CD4-positive, alpha-beta memory T cell (primary cell): ENCODE measurements at regions of chr20 and their contacts with region 1.

Region 1: GRCh38 chr20:59207742-59208357 is 44.2 kb downstream of the ZNF831 start:
- DNase-seq: peak; percentile 76 to 79 (median 78)
- H3K4me3 ChIP-seq: no peak overlapping the region
- H3K4me3 Mint-ChIP-seq: peak overlapping the region in 4 of 8 donors; percentile 15 to 53 (median 33)
- H3K27ac ChIP-seq: no peak overlapping the region
- H3K27ac Mint-ChIP-seq: peak overlapping the region; percentile 35 to 95 (median 88)
- H3K4me1 ChIP-seq: peaks cover 14% of the 10 kb centered on the region
- H3K4me1 Mint-ChIP-seq: peaks cover 29 to 55% (median 35%) of the 10 kb centered on the region in 4 donors
- H3K27me3 ChIP-seq: no peaks in the 10 kb centered on the region
- H3K27me3 Mint-ChIP-seq: no peaks in the 10 kb centered on the region

Region 2: GRCh38 chr20:59055295-59055694 is 152.6 kb before region 1 on chr20:
- CTCF ChIA-PET with region 1: interaction called, 14 read pairs
- POLR2A ChIA-PET with region 1: no interaction called
- intact Hi-C with region 1: no loop called
- DNase-seq: peak in 4 of 5 donors; percentile 23 to 35 (median 27)
- H3K4me3 ChIP-seq: no peak overlapping the region
- H3K4me3 Mint-ChIP-seq: no peak overlapping the region
- H3K27ac ChIP-seq: no peak overlapping the region
- H3K27ac Mint-ChIP-seq: no peak overlapping the region
- H3K4me1 ChIP-seq: no peaks in the 10 kb centered on the region
- H3K4me1 Mint-ChIP-seq: no peaks in the 10 kb centered on the region
- H3K27me3 ChIP-seq: no peaks in the 10 kb centered on the region
- H3K27me3 Mint-ChIP-seq: peaks cover 4 to 25% of the 10 kb centered on the region in 2 donors

Region 3: DNA sequence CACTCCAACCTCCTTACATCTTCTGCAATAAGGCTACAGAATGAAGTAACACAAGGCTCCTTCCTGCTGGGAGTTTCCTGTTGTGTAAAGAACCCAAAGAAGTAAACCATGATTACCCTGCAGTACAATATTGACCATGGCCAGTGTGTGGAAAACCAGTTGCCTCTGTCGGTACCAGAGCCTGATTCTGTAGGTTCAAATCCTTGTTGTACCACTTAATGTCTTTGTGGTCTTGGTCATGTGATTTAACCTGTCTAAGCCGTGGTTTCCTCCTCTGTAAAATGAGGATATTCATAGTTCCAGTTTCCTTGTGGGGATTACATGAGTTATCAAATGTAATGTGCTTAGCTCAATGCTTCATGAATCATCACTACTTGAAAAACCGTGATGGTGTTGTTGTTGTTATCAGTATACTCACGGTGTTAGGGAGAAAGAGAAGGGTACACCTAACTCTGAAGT is 105.0 kb before region 1 on chr20:
- CTCF ChIA-PET with region 1: interaction called, 122 read pairs
- POLR2A ChIA-PET with region 1: no interaction called
- intact Hi-C with region 1: no loop called
- DNase-seq: no peak
- H3K4me3 ChIP-seq: no peak overlapping the region
- H3K4me3 Mint-ChIP-seq: peak overlapping the region in 1 of 8 donors; percentile 25
- H3K27ac ChIP-seq: no peak overlapping the region
- H3K27ac Mint-ChIP-seq: peak overlapping the region in 5 of 7 donors; percentile 1 to 29 (median 25)
- H3K4me1 ChIP-seq: peaks cover 12% of the 10 kb centered on the region
- H3K4me1 Mint-ChIP-seq: peaks cover 11 to 26% (median 20%) of the 10 kb centered on the region in 4 donors
- H3K27me3 ChIP-seq: no peaks in the 10 kb centered on the region
- H3K27me3 Mint-ChIP-seq: peaks cover 0 to 2% of the 10 kb centered on the region in 2 donors

Region 4: DNA sequence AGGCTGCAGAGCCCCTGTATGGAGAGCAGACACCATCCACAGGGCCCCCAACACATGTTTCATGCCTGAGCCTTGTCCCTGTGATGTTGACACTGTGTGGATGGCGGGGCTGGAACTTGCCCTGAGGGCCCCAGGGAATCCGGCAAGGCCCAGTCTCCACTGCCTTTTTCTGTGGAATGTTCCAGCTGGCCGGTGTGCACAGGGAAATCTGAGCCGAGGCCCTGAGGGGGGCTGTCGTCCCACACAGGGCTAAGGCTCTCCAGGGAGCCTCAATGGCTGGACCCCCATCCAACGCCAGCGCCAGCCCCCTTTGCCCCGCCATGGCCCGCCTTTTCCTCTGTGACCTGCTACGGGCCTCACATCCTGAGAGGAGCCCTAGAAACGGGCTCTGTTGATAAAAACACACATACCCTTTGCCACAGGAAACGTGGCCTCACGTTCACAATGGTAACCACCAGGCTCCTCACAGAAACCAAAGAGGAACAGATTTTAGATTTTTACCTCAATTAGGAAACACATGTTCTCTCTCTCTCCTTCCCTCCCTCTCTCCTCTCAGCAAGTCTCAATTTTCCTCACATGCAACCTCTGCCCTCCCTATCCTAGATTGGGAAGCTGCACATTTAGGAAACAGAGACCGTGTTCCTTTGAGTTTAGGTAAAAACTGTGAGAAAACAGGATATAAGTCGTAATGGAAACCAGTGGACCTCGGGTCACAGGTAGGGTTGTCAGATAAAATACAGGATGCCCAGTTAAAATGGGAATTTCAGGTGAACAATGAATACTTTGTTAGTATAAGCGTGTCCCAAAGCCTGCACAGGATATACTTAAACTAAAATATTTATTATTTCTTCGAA is 58.0 kb before region 1 on chr20:
- CTCF ChIA-PET with region 1: interaction called, 85 read pairs
- POLR2A ChIA-PET with region 1: interaction called, 14 read pairs
- intact Hi-C with region 1: loop called (anchors 2 kb)
- DNase-seq: peak; percentile 88 to 93 (median 91)
- H3K4me3 ChIP-seq: peak overlapping the region in 1 of 2 donors; percentile 2
- H3K4me3 Mint-ChIP-seq: peak overlapping the region; percentile 73 to 91 (median 80)
- H3K27ac ChIP-seq: peak overlapping the region; percentile 93
- H3K27ac Mint-ChIP-seq: peak overlapping the region; percentile 96 to 100 (median 100)
- H3K4me1 ChIP-seq: peaks cover 92% of the 10 kb centered on the region
- H3K4me1 Mint-ChIP-seq: peaks cover 72 to 97% (median 88%) of the 10 kb centered on the region in 4 donors
- H3K27me3 ChIP-seq: no peaks in the 10 kb centered on the region
- H3K27me3 Mint-ChIP-seq: no peaks in the 10 kb centered on the region

Region 5: GRCh38 chr20:59165891-59166709 is 41.8 kb before region 1 on chr20:
- CTCF ChIA-PET with region 1: interaction called, 33 read pairs
- POLR2A ChIA-PET with region 1: interaction called, 13 read pairs
- intact Hi-C with region 1: loop called (anchors 5 kb)
- DNase-seq: peak; percentile 70 to 83 (median 80)
- H3K4me3 ChIP-seq: peak overlapping the region; percentile 61 to 64
- H3K4me3 Mint-ChIP-seq: peak overlapping the region; percentile 84 to 96 (median 88)
- H3K27ac ChIP-seq: peak overlapping the region; percentile 97
- H3K27ac Mint-ChIP-seq: peak overlapping the region; percentile 97 to 99 (median 99)
- H3K4me1 ChIP-seq: peaks cover 88% of the 10 kb centered on the region
- H3K4me1 Mint-ChIP-seq: peaks cover 72 to 98% (median 82%) of the 10 kb centered on the region in 4 donors
- H3K27me3 ChIP-seq: no peaks in the 10 kb centered on the region
- H3K27me3 Mint-ChIP-seq: no peaks in the 10 kb centered on the region

Region 6: DNA sequence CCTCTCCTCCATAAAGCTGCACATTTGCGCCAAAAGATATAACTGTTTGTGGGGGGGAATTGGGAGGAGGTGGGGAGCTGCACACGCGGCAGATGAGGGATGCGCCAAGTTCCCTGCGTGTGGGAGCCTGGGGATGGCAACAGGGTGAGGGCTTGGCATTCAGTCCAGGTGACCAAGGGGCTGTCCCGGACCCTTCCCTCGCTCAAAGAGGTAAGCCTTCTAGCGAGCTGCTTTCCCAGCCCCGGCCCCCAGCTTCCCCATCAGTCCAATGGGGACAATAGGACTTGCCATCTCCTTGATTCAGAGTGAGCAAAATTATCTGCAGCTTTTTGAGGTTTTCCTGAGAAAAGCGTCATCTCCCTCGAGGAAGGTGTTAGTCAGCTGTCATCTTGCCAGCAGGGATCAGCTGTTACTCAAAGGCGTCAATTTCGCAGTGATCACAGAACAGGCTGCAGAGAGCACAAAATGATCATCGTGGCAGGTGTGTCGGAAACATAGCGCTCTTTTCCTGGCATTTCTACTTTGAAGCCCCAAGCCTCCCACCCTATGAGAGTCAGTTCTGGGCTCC is 22.9 kb before region 1 on chr20:
- CTCF ChIA-PET with region 1: interaction called, 40 read pairs
- POLR2A ChIA-PET with region 1: no interaction called
- intact Hi-C with region 1: no loop called
- DNase-seq: no peak
- H3K4me3 ChIP-seq: no peak overlapping the region
- H3K4me3 Mint-ChIP-seq: no peak overlapping the region
- H3K27ac ChIP-seq: no peak overlapping the region
- H3K27ac Mint-ChIP-seq: peak overlapping the region in 5 of 7 donors; percentile 47 to 81 (median 54)
- H3K4me1 ChIP-seq: peaks cover 41% of the 10 kb centered on the region
- H3K4me1 Mint-ChIP-seq: peaks cover 43 to 79% (median 59%) of the 10 kb centered on the region in 4 donors
- H3K27me3 ChIP-seq: no peaks in the 10 kb centered on the region
- H3K27me3 Mint-ChIP-seq: no peaks in the 10 kb centered on the region

Region 7: DNA sequence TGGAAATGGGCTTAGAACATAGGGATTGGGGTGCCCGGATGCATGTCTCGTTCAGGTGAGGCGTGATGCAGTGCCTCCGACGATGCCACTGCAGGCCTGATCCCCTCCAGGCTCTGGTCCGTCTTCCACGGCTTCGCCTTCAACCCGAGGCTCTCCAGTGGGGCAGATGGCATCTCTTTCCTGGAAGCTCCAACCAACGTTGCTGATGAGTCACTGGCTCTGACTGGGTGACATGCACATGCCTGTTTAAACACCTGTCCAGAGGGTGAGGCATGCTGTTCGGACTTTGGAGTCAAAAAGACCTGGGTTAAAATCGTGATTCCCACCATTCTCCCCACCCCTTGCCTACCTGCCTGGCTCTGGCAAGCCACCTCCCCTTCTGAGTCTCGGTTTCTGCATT is 83.9 kb after region 1 on chr20:
- CTCF ChIA-PET with region 1: no interaction called
- POLR2A ChIA-PET with region 1: no interaction called
- intact Hi-C with region 1: no loop called
- DNase-seq: no peak
- H3K4me3 ChIP-seq: no peak overlapping the region
- H3K4me3 Mint-ChIP-seq: no peak overlapping the region
- H3K27ac ChIP-seq: no peak overlapping the region
- H3K27ac Mint-ChIP-seq: no peak overlapping the region
- H3K4me1 ChIP-seq: no peaks in the 10 kb centered on the region
- H3K4me1 Mint-ChIP-seq: peaks cover 0 to 14% (median 0%) of the 10 kb centered on the region in 4 donors
- H3K27me3 ChIP-seq: no peaks in the 10 kb centered on the region
- H3K27me3 Mint-ChIP-seq: peaks cover 5 to 7% of the 10 kb centered on the region in 2 donors

Region 8: GRCh38 chr20:59403261-59403961 is 195.6 kb after region 1 on chr20:
- CTCF ChIA-PET with region 1: interaction called, 11 read pairs
- POLR2A ChIA-PET with region 1: interaction called, 3 read pairs
- intact Hi-C with region 1: no loop called
- DNase-seq: peak; percentile 50 to 75 (median 62)
- H3K4me3 ChIP-seq: peak overlapping the region in 1 of 2 donors; percentile 33
- H3K4me3 Mint-ChIP-seq: peak overlapping the region in 4 of 8 donors; percentile 49 to 77 (median 76)
- H3K27ac ChIP-seq: no peak overlapping the region
- H3K27ac Mint-ChIP-seq: peak overlapping the region in 2 of 7 donors; percentile 49 to 55
- H3K4me1 ChIP-seq: peaks cover 32% of the 10 kb centered on the region
- H3K4me1 Mint-ChIP-seq: peaks cover 0 to 4% (median under 1%) of the 10 kb centered on the region in 4 donors
- H3K27me3 ChIP-seq: no peaks in the 10 kb centered on the region
- H3K27me3 Mint-ChIP-seq: peaks cover 17 to 22% of the 10 kb centered on the region in 2 donors

Region 9: DNA sequence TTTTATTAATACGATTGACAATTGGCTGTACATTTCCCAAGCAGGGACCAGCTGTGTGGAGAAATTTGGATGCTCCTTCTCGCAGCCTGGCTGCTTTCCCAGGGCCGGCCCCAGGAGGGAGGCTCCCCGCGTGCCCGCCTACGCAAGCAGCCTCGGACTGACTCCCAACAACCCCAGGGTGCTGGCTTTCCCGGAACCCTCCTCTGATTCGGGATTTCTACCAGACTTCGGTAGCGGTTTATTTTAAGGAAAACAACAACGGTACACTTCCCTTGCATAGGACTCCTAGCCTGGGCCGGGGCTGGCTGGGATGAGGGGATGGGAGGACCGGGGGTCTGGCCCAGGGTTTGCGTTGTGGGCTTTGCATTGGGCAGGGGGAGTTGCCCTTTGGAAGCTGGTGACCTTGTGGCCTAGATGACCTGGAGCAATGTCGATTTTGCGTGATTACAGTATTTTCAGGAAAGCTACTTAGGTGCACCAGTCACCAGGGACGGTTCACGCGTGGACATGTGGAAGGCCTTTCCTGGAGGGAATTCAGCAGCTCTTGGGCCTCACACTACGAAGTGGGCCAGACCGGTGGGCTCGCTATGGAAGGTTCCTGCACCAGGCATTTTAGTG is 375.7 kb after region 1 on chr20:
- CTCF ChIA-PET with region 1: no interaction called
- POLR2A ChIA-PET with region 1: no interaction called
- intact Hi-C with region 1: no loop called
- DNase-seq: no peak
- H3K4me3 ChIP-seq: no peak overlapping the region
- H3K4me3 Mint-ChIP-seq: no peak overlapping the region
- H3K27ac ChIP-seq: no peak overlapping the region
- H3K27ac Mint-ChIP-seq: no peak overlapping the region
- H3K4me1 ChIP-seq: no peaks in the 10 kb centered on the region
- H3K4me1 Mint-ChIP-seq: no peaks in the 10 kb centered on the region
- H3K27me3 ChIP-seq: no peaks in the 10 kb centered on the region
- H3K27me3 Mint-ChIP-seq: peaks cover 9 to 10% of the 10 kb centered on the region in 2 donors